ENCODE measurements at regions of chr1 and their contacts with region 1.

Region 1: DNA sequence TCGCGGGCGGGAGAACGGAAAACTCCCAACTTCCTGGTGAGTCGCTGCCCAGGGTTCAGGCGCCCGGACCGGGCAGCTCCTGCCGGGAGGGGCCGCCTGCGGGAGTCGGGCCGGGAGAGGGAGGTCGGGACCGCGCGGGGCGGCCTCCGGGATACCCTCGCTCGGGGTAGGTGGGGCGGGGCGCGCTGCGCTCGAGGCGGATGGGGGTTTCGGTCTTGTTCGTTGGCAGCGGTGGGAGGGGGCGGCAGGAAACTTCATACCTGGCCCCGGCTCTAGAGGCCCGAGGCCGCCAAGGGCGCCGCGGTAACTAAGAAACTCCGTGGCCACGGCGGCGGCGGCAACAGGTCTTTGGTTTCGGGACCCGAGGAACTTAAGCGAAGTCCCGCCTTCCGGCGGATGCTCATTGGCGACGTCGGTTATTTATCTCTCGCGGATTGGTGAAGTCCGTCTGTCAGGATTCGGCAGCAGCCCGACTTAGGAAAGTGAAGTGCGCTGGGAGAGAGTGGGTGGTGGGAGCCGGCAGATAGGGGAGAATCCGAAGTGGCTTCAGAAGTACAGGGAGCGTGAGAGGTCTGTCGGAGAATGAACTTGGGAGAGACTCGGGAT is 546 bp downstream of the NEK7 start:
- DNase-seq: peak; percentile 51 to 92 (median 82)
- ATAC-seq: peak; percentile 43
- H3K4me3 ChIP-seq: peak overlapping the region; percentile 67 to 86
- H3K4me3 Mint-ChIP-seq: peak overlapping the region; percentile 99
- H3K27ac ChIP-seq: peak overlapping the region; percentile 85 to 88
- H3K27ac Mint-ChIP-seq: peak overlapping the region; percentile 100
- H3K4me1 ChIP-seq: peaks cover 31% of the 10 kb centered on the region
- H3K4me1 Mint-ChIP-seq: peaks cover 41% of the 10 kb centered on the region
- H3K27me3 ChIP-seq: no peaks in the 10 kb centered on the region
- H3K27me3 Mint-ChIP-seq: no peaks in the 10 kb centered on the region
- CTCF ChIP-seq: no peak

Region 2: GRCh38 chr1:197902454-197903195 is 254.7 kb before region 1 on chr1 and contains the start of gene C1orf53:
- CTCF ChIA-PET with region 1: no interaction called
- POLR2A ChIA-PET with region 1: no interaction called
- intact Hi-C with region 1: loop called in 1 of 2 experiments (anchors 5 kb)
- DNase-seq: peak; percentile 35 to 86 (median 66)
- ATAC-seq: peak; percentile 89
- H3K4me3 ChIP-seq: peak within 1 kb of the TSS; percentile 66 to 75
- H3K4me3 Mint-ChIP-seq: peak within 1 kb of the TSS; percentile 97
- H3K27ac ChIP-seq: peak within 1 kb of the TSS; percentile 40 to 49
- H3K27ac Mint-ChIP-seq: peak within 1 kb of the TSS; percentile 76
- H3K4me1 ChIP-seq: peaks cover 13% of the 10 kb centered on the region
- H3K4me1 Mint-ChIP-seq: peaks cover 12% of the 10 kb centered on the region
- H3K27me3 ChIP-seq: peaks cover 11 to 16% of the 10 kb centered on the region in 2 experiments
- H3K27me3 Mint-ChIP-seq: peaks cover 51% of the 10 kb centered on the region
- CTCF ChIP-seq: no peak
- total RNA-seq, gene C1orf53: not detected

Region 3: DNA sequence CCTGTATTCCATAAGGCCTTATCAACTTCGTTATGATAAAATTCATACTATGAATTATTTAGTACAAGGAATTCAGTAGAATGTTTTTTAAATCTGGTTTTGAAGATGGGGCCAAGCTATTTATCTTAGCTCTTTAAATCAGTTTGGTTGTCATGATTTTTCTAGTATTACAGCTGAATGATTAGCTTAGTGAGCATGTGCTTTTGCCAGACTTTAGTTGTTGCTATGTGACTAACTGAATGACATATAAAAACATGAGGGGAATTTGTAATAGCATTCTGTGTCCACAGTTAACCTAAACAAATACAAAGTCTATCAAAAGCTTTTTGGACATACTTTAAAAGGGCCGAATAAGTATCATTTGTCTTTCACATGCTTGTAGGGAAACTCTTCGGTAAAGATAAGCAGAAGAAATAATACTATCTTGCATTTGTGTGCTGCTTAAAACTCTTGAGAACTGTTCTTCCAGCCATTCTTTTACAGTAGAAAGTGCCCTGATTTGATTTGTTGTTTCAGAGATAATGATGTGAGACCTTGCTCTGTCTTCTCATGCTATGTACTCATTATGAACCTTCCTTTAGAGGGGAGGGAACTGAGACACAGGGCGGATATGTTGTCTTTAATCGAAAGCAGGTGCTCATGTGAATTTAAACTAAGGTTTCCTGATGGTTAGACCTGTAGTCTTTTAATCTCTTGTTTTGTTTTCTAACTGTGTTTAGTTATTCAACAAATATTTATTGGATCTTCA is 18.3 kb after region 1 on chr1:
- CTCF ChIA-PET with region 1: interaction called, 3 read pairs
- POLR2A ChIA-PET with region 1: interaction called, 8 read pairs
- intact Hi-C with region 1: loop called (anchors 2 kb)
- DNase-seq: peak in 2 of 9 experiments; percentile 47 to 67
- ATAC-seq: peak; percentile 79
- H3K4me3 ChIP-seq: peak overlapping the region in 1 of 2 experiments; percentile 15
- H3K4me3 Mint-ChIP-seq: peak overlapping the region; percentile 55
- H3K27ac ChIP-seq: peak overlapping the region; percentile 36 to 60
- H3K27ac Mint-ChIP-seq: peak overlapping the region; percentile 88
- H3K4me1 ChIP-seq: peaks cover 84% of the 10 kb centered on the region
- H3K4me1 Mint-ChIP-seq: peaks cover 89% of the 10 kb centered on the region
- H3K27me3 ChIP-seq: no peaks in the 10 kb centered on the region
- H3K27me3 Mint-ChIP-seq: no peaks in the 10 kb centered on the region
- CTCF ChIP-seq: no peak

Region 4: GRCh38 chr1:198258491-198258890 is 101.1 kb after region 1 on chr1:
- CTCF ChIA-PET with region 1: interaction called, 5 read pairs
- POLR2A ChIA-PET with region 1: interaction called, 6 read pairs
- intact Hi-C with region 1: loop called (anchors 5 kb)
- DNase-seq: no peak
- ATAC-seq: no peak
- H3K4me3 ChIP-seq: no peak overlapping the region
- H3K4me3 Mint-ChIP-seq: no peak overlapping the region
- H3K27ac ChIP-seq: no peak overlapping the region
- H3K27ac Mint-ChIP-seq: no peak overlapping the region
- H3K4me1 ChIP-seq: peaks cover 3% of the 10 kb centered on the region
- H3K4me1 Mint-ChIP-seq: peaks cover 54% of the 10 kb centered on the region
- H3K27me3 ChIP-seq: no peaks in the 10 kb centered on the region
- H3K27me3 Mint-ChIP-seq: no peaks in the 10 kb centered on the region
- CTCF ChIP-seq: no peak

Region 5: DNA sequence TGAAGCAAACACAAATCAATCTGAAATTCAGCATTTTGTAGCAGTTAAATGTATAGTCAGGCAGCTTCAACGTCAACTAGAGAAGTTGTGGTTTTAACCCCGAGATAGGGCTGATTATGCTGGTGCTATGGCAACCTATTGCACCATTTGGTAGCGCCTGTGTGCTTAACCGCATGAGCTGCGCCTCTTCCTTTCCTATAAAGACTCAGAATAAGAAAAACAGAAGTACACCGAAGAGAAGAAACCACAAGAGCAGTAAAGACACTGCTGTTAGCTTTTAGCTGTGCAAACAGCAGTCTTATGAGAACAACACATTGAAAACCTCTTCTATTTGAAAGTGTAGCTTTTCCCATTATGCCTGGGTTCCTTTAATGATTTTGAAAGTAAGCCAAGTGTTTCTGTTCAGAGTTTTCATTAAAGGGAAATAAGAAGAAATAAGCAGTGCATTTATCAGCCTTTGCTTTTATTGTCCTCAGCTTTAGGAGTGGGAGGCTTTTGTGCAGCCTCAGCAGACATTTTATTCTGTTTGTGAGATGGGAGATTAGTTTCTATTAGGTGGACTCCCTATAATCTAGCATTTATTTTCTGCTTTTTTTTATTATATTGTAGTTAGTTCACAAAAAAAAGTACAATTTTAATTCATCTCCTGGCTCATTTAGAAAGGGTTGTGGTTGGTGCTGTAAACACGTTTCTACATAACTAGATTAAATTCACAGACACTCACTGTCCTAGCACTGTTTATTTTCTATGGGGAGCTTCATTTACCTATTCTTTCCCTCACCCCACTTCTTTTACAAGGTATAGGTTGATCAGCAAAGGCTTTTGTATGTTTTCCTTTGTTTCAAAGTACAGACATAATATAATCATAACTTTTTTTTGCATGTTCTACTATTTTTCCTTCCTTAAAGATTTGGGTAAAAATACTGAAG is 524.8 kb after region 1 on chr1:
- CTCF ChIA-PET with region 1: no interaction called
- POLR2A ChIA-PET with region 1: interaction called, 3 read pairs
- intact Hi-C with region 1: loop called (anchors 2 to 5 kb)
- DNase-seq: peak; percentile 57 to 98 (median 79)
- ATAC-seq: peak; percentile 64
- H3K4me3 ChIP-seq: peak overlapping the region; percentile 9 to 18
- H3K4me3 Mint-ChIP-seq: peak overlapping the region; percentile 68
- H3K27ac ChIP-seq: peak overlapping the region; percentile 66 to 97
- H3K27ac Mint-ChIP-seq: peak overlapping the region; percentile 93
- H3K4me1 ChIP-seq: peaks cover 92% of the 10 kb centered on the region
- H3K4me1 Mint-ChIP-seq: peaks cover 84% of the 10 kb centered on the region
- H3K27me3 ChIP-seq: no peaks in the 10 kb centered on the region
- H3K27me3 Mint-ChIP-seq: no peaks in the 10 kb centered on the region
- CTCF ChIP-seq: no peak

Measured in CD8-positive, alpha-beta T cell (primary cell).